A673 (cell line): ENCODE measurements at regions of chr16 and their contacts with region 1.

Region 1: DNA sequence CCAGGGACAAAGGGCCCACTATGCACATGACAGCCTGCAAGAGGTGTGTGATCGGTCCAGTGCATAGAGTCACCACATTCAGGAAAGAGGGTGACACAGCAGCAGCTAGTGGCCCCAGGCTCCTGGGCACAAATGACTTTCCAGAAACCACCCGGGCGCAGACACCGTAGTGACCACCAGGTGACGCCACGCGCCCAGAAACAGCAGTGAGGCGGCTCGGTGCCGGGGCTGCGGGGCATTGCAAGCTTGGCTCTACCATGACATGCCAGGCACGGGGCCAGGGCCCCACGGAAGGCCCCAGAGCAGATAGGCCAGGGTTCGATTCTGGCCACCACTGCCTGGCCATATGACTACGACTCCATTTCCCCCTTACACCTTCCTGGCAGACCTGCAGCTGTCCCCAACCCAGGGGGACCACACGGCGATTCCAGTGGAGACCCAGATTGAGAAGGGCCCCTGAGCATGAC is 6.7 kb downstream of the RHBDF1 start:
- DNase-seq: peak; percentile 85
- H3K4me3 ChIP-seq: no peak overlapping the region
- H3K27ac ChIP-seq: no peak overlapping the region
- H3K4me1 ChIP-seq: no peaks in the 10 kb centered on the region
- H3K27me3 ChIP-seq: no peaks in the 10 kb centered on the region
- CTCF ChIP-seq: peak; percentile 97

Region 2: DNA sequence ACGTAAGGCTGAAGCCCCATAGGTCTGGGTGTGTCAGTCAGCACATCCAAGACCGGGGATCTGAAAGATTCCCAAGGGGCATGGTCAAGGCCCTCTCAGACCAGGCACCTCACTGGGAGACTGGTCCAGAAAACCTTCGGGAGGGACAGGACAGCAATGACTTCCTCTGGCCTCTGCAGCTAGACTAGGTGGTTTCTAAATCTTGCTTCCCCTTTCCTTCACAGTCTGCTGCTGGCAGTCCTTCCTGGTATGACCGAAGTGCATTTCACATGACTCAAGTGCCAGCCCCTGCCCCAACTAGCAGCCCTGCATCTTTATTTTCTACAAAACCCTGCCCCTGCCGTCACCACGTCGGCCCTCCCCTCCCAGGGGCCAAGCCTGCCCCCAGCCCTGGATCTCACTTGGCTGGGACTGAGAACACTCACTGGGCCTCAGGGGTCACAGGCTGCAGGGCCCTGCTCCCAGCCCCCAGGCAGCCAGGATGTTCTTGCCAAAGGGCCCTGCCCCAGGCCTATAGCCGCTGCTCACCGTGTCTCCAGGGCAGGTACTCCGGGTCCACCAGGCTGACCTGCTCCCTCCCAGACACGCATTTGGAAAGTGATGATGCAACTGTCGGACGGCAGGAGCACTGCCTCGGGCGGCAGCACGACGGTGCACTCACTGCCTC is 30.6 kb before region 1 on chr16:
- CTCF ChIA-PET with region 1: no interaction called
- POLR2A ChIA-PET with region 1: no interaction called
- intact Hi-C with region 1: no loop called
- DNase-seq: no peak
- H3K4me3 ChIP-seq: no peak overlapping the region
- H3K27ac ChIP-seq: no peak overlapping the region
- H3K4me1 ChIP-seq: no peaks in the 10 kb centered on the region
- H3K27me3 ChIP-seq: no peaks in the 10 kb centered on the region
- CTCF ChIP-seq: no peak

Region 3: GRCh38 chr16:91484-91883 is 25.8 kb after region 1 on chr16:
- CTCF ChIA-PET with region 1: interaction called, 41 read pairs
- POLR2A ChIA-PET with region 1: interaction called, 3 read pairs
- intact Hi-C with region 1: no loop called
- DNase-seq: peak; percentile 92
- H3K4me3 ChIP-seq: no peak overlapping the region
- H3K27ac ChIP-seq: peak overlapping the region; percentile 82
- H3K4me1 ChIP-seq: peaks cover 18% of the 10 kb centered on the region
- H3K27me3 ChIP-seq: no peaks in the 10 kb centered on the region
- CTCF ChIP-seq: no peak

Region 4: DNA sequence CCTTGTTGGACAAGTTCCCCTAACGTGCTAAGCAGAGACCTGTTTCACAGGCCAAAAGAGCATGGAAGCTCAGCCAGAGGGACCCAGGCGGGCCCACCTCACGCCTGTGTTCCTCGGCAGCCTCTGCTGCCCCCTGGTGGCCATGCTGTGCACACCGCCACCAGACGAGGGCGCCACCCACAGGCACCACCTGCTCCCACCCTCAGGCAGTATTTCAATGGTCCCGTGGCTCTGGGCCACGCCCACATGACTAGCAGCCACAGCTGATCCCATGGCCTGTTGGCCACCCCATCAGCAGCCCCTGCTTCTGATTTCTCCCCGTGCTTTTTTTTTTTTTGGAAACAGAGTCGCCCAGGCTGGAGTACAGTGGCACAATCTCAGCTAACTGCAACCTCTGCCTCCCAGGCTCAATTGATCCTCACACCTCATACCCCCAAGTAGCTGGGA is 31.3 kb after region 1 on chr16:
- CTCF ChIA-PET with region 1: interaction called, 41 read pairs
- POLR2A ChIA-PET with region 1: interaction called, 3 read pairs
- intact Hi-C with region 1: loop called (anchors 1 kb)
- DNase-seq: peak; percentile 92
- H3K4me3 ChIP-seq: no peak overlapping the region
- H3K27ac ChIP-seq: no peak overlapping the region
- H3K4me1 ChIP-seq: peaks cover 7% of the 10 kb centered on the region
- H3K27me3 ChIP-seq: no peaks in the 10 kb centered on the region
- CTCF ChIP-seq: peak; percentile 100

Region 5: DNA sequence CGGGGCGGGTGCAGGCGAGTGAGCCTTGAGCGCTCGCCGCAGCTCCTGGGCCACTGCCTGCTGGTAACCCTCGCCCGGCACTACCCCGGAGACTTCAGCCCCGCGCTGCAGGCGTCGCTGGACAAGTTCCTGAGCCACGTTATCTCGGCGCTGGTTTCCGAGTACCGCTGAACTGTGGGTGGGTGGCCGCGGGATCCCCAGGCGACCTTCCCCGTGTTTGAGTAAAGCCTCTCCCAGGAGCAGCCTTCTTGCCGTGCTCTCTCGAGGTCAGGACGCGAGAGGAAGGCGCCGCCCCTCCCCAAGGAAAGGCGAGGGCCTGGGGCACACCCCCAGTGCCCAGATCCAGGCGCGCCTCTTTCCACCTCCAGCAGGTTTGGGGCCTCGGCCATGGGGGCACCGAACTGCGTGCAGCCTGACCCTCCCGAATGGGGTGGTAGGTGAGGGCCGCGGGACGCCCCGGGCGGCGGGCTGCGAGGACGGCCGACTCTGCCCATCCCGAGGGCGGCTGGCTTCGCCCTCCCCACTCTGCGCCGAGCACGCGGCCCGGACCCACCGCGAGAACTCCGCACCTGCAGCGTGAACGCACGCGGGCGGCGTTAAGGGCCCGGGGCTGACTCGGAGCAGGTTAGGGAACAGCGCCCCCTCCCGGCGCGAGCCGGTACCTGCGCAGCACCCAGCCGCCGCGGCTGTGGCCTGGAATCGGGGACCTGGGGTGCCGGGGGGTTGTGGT is 115.4 kb after region 1 on chr16:
- CTCF ChIA-PET with region 1: interaction called, 3 read pairs
- POLR2A ChIA-PET with region 1: no interaction called
- intact Hi-C with region 1: loop called (anchors 1 kb)
- DNase-seq: peak; percentile 92
- H3K4me3 ChIP-seq: peak overlapping the region; percentile 52
- H3K27ac ChIP-seq: no peak overlapping the region
- H3K4me1 ChIP-seq: peaks cover 19% of the 10 kb centered on the region
- H3K27me3 ChIP-seq: peaks cover 13% of the 10 kb centered on the region
- CTCF ChIP-seq: peak; percentile 95

Region 6: DNA sequence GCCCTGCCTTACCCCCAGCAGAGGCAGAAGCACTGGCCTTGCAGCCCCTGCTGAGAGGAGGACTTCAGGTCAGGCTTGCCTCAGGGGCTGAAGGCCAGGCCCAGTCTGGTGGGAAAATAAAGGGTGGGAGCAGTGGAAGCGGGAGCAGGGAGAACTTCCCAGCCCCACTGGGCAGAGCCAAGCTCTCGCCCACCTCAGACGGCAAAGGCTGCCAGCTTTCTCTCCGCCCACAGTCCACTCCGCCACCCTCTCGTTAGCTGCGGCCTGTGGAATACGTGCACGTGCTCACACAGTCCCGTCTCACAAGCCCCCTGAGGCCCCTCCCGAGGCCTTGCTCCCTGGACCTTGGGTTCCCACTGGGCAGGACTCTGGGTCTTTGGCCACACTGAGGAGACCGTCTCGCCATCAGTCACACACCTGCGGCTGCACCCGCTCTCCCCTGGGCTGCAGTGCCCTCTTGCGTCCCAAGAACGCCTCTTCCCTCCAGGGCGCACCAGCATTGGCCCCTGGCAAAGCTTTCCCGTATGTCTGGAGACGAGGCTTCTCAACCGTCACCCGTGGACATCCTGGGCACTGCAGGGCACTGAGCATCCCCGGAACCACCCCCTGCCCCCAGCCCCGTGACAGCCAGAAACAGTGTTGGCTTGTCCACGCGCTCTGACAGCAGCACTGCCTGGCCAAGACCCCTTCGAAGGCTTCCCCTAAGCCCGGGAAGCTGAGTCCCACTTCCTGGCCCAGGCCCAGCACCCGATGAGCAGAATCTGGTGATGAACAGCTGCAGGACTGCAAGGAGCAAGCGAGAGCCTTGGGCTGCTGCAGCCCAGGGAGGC is 296.4 kb after region 1 on chr16:
- CTCF ChIA-PET with region 1: interaction called, 11 read pairs
- POLR2A ChIA-PET with region 1: no interaction called
- intact Hi-C with region 1: no loop called
- DNase-seq: peak; percentile 88
- H3K4me3 ChIP-seq: no peak overlapping the region
- H3K27ac ChIP-seq: no peak overlapping the region
- H3K4me1 ChIP-seq: no peaks in the 10 kb centered on the region
- H3K27me3 ChIP-seq: no peaks in the 10 kb centered on the region
- CTCF ChIP-seq: peak; percentile 89

Region 7: GRCh38 chr16:589658-590159 is 524.0 kb after region 1 on chr16 and contains the start of gene RAB40C:
- CTCF ChIA-PET with region 1: interaction called, 12 read pairs
- POLR2A ChIA-PET with region 1: no interaction called
- intact Hi-C with region 1: no loop called
- DNase-seq: peak; percentile 99
- H3K4me3 ChIP-seq: peak within 1 kb of the TSS; percentile 94
- H3K27ac ChIP-seq: peak within 1 kb of the TSS; percentile 99
- H3K4me1 ChIP-seq: peaks cover 29% of the 10 kb centered on the region
- H3K27me3 ChIP-seq: no peaks in the 10 kb centered on the region
- CTCF ChIP-seq: no peak
- total RNA-seq, gene RAB40C: 19.9 and 20.6 TPM in 2 replicates